ENCODE measurements at regions of chr5 and their contacts with region 1.

Region 1: DNA sequence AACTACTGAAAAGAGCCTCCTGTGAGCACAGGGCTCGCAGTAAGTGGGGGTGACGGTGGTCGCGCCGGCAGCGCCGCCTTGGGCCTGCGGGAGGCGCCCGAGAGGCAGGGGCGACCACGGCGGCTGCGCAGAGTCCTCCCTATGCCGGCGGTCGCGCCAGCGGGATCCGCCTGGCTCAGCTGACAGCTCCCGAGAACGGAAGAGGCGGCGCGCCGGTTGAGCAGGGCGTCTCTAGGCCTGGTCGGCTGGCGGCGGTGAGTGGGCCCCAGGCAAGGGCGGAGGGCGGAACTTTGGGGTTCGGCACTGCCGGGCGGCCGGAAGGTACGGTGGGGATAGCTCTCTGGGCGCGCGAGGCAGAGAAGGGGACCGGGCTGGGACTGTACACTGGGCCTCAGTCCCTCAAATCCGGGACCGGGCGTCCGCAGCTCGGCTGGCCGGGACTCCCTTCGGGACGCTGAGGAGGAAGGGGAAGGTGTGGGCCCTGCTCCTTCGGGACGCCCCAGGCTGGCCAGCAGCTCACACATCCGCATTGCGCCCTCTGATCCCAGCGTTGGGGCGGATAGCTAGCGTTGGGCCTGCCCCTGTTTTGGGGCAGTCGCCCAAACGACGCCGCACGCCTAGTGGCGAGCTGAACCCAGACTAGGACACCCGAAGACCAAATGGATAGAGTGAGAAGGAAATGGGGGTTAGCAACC is at the start of gene RNF14:
- DNase-seq: peak; percentile 86 to 97 (median 90)
- ATAC-seq: peak; percentile 95
- H3K4me3 ChIP-seq: peak within 1 kb of the TSS; percentile 76
- H3K4me3 Mint-ChIP-seq: peak within 1 kb of the TSS; percentile 98
- H3K27ac ChIP-seq: peak within 1 kb of the TSS; percentile 90 to 95
- H3K27ac Mint-ChIP-seq: peak within 1 kb of the TSS; percentile 99
- H3K4me1 ChIP-seq: peaks cover 15% of the 10 kb centered on the region
- H3K4me1 Mint-ChIP-seq: peaks cover 41% of the 10 kb centered on the region
- H3K27me3 ChIP-seq: no peaks in the 10 kb centered on the region
- H3K27me3 Mint-ChIP-seq: no peaks in the 10 kb centered on the region
- CTCF ChIP-seq: peak; percentile 97
- total RNA-seq, gene RNF14: 8.9 to 10.7 TPM

Region 2: DNA sequence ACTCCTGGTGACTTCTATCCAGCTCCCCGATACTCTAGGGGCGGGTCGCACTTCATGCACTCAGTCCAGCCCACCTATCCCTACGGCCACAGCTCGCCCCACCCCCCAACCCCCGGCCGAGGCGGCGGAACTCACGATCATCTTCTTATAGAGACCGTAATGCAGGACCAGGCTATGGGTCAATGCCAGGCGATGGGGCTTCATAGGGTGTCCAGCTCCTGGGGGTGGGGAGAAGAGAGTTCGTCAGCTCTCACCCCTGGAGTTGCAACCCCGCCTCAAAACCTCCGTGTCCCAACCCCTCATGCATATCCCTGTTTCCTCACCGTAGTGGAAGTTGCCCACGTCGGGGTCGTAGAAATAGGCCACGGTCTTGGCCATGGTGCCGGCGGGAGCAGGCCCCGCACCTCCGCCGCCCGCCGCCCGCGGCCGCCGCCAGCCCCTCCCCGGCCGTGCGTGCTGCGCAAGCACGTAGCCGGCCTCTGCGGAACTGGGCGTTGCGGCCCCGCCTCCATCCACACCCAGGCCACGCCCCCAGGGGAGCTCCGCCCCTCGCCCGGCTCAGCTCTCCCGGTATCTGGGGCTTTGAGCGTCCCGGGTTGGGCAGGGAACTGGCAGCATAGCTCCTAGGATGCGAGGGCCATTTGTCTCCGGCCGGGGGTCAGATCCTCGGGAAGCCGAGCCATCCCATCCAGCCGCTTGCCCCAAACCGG is 332.5 kb before region 1 on chr5 and contains the starts of genes HDAC3 and RELL2:
- CTCF ChIA-PET with region 1: interaction called, 4 read pairs
- POLR2A ChIA-PET with region 1: interaction called, 18 read pairs
- intact Hi-C with region 1: no loop called
- DNase-seq: peak; percentile 88 to 97 (median 94)
- ATAC-seq: peak; percentile 86
- H3K4me3 ChIP-seq: peak within 1 kb of the TSS; percentile 97
- H3K4me3 Mint-ChIP-seq: peak within 1 kb of the TSS; percentile 92
- H3K27ac ChIP-seq: peak within 1 kb of the TSS; percentile 77 to 79
- H3K27ac Mint-ChIP-seq: peak within 1 kb of the TSS; percentile 89
- H3K4me1 ChIP-seq: peaks cover 42% of the 10 kb centered on the region
- H3K4me1 Mint-ChIP-seq: peaks cover 45% of the 10 kb centered on the region
- H3K27me3 ChIP-seq: no peaks in the 10 kb centered on the region
- H3K27me3 Mint-ChIP-seq: no peaks in the 10 kb centered on the region
- CTCF ChIP-seq: no peak
- total RNA-seq, gene HDAC3: 51.1 to 52.7 TPM
- total RNA-seq, gene RELL2: 10.9 to 11.4 TPM

Region 3: DNA sequence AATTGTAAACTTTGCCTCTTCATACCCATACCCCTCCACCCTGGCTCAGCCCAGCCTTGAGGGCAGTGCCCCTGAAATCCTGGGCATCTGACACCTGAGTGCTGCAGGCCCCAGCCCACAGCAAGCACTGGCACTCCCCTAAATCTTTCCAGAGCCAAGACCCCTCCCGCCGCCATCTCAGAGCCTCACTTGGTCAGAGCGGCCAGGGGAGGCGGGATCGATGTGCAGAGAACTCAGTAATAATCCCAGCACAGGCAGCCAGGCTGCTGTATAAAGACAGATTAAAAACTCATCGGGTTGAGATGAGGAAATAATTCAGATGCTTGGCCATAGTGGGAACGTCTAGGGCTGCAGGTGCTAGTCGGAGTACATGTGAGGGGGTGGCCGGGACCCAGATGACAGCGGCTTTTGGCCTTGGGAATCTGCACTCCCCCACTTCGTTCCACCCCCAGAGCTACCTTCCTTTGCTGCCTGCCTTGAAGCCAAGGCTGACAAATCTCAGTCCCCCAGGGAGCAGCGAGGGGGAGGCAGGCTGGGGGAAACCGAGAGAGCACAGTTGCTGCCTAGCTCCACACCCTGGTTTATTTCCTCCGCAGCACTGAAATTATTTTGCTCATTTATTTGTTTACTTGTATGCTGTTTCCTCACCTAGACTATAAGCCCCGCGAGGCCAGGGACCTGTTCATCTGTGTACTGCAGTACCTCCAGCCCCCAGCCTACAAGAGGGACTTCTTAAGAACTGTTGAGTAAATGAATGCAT is 267.5 kb before region 1 on chr5:
- CTCF ChIA-PET with region 1: interaction called, 4 read pairs
- POLR2A ChIA-PET with region 1: interaction called, 18 read pairs
- intact Hi-C with region 1: no loop called
- DNase-seq: peak in 1 of 14 experiments; percentile 15
- ATAC-seq: peak; percentile 35
- H3K4me3 ChIP-seq: peak overlapping the region; percentile 73
- H3K4me3 Mint-ChIP-seq: no peak overlapping the region
- H3K27ac ChIP-seq: no peak overlapping the region
- H3K27ac Mint-ChIP-seq: no peak overlapping the region
- H3K4me1 ChIP-seq: peaks cover 23% of the 10 kb centered on the region
- H3K4me1 Mint-ChIP-seq: peaks cover 19% of the 10 kb centered on the region
- H3K27me3 ChIP-seq: peaks cover 32 to 33% of the 10 kb centered on the region in 2 experiments
- H3K27me3 Mint-ChIP-seq: peaks cover 51% of the 10 kb centered on the region
- CTCF ChIP-seq: no peak

Region 4: DNA sequence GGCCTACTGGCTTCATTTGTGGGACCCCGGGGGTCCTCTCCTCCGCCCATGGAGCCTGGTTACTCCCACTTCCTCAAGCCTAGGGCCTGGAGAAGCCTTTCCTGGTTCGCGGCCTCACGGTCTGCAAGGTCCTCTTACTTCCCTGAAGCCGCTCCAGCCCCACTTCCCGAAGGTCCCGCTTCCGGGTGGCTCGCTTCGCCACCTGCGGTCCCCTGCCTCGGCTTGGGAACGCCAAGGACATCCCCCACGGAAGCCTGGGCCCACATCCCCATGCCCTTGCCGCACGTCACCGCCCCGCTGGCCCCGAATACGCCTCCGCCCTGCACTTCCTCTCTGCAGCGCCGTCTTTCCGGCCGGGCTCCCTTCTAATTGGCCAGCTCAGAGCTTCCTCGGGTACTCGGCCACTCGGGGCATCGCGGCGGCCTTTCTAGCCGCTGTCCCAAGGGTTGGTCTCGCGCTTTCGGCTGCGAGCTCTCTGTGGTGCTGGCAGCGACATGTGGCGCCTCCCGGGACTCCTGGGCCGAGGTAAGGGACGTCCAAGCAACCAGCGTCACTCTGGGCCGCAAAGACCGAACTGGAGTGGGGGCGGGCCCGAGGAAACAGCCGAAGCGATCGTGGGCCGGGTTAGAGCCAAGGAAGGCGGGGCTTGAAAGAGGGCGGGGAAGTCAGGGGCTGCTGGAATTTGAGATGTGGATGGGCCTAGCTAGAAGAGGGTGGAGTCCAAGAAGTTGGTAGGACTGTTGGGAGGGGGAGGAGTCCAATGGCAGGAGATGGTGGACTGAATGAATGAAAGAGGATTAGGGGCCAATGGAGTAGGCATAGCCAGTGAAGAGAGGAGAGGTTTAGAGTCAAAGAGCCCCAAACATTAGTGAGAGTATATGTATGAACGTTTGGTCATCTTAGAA is 45.4 kb before region 1 on chr5 and contains the start of gene DELE1:
- CTCF ChIA-PET with region 1: interaction called, 15 read pairs
- POLR2A ChIA-PET with region 1: interaction called, 36 read pairs
- intact Hi-C with region 1: loop called in 1 of 2 experiments (anchors 2 kb)
- DNase-seq: peak; percentile 82 to 95 (median 87)
- ATAC-seq: peak; percentile 94
- H3K4me3 ChIP-seq: peak within 1 kb of the TSS; percentile 75
- H3K4me3 Mint-ChIP-seq: peak within 1 kb of the TSS; percentile 96
- H3K27ac ChIP-seq: peak within 1 kb of the TSS; percentile 94 to 96
- H3K27ac Mint-ChIP-seq: peak within 1 kb of the TSS; percentile 99
- H3K4me1 ChIP-seq: peaks cover 30% of the 10 kb centered on the region
- H3K4me1 Mint-ChIP-seq: peaks cover 45% of the 10 kb centered on the region
- H3K27me3 ChIP-seq: no peaks in the 10 kb centered on the region
- H3K27me3 Mint-ChIP-seq: no peaks in the 10 kb centered on the region
- CTCF ChIP-seq: no peak
- total RNA-seq, gene DELE1: 60.0 to 61.1 TPM

Region 5: DNA sequence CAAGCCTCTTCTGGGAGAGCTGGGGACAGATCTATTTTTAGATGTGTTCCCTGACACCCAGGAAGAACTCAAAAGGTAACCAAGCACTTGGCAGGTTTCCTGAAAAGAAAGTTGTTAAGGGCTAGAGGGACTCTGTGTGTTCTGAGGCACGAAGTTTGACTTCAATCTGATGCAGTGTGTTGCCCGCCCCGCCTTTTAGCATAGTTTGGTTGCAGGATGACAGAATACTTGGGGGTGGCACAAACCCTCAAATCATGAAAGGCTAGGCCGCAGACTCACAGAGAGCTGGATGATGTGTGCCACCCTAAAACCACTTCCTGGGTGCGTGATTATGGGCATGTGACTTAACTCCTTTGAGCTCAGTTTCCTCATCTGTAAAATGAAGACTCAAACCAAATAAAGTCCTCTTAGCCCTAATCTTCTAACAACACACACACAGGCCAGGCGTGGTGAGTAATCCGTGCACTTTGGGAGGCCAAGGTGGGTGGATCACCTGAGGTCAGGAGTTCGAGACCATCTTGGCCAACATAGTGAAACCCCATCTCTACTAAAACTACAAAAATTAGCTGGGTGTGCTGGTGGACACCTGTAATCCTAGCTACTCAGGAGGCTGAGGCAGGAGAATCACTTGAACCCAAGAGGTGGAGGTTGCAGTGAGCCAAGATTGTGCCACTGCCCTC is 126.7 kb after region 1 on chr5:
- CTCF ChIA-PET with region 1: interaction called, 3 read pairs
- POLR2A ChIA-PET with region 1: interaction called, 16 read pairs
- intact Hi-C with region 1: no loop called
- DNase-seq: peak; percentile 67 to 96 (median 76)
- ATAC-seq: peak; percentile 85
- H3K4me3 ChIP-seq: no peak overlapping the region
- H3K4me3 Mint-ChIP-seq: peak overlapping the region; percentile 28
- H3K27ac ChIP-seq: peak overlapping the region; percentile 71 to 75
- H3K27ac Mint-ChIP-seq: peak overlapping the region; percentile 94
- H3K4me1 ChIP-seq: peaks cover 61% of the 10 kb centered on the region
- H3K4me1 Mint-ChIP-seq: peaks cover 70% of the 10 kb centered on the region
- H3K27me3 ChIP-seq: no peaks in the 10 kb centered on the region
- H3K27me3 Mint-ChIP-seq: no peaks in the 10 kb centered on the region
- CTCF ChIP-seq: no peak

Region 6: GRCh38 chr5:142713121-142713706 is 744.2 kb after region 1 on chr5:
- CTCF ChIA-PET with region 1: interaction called, 14 read pairs
- POLR2A ChIA-PET with region 1: no interaction called
- intact Hi-C with region 1: no loop called
- DNase-seq: peak; percentile 70 to 93 (median 79)
- ATAC-seq: peak; percentile 93
- H3K4me3 ChIP-seq: peak overlapping the region; percentile 50
- H3K4me3 Mint-ChIP-seq: peak overlapping the region; percentile 76
- H3K27ac ChIP-seq: no peak overlapping the region
- H3K27ac Mint-ChIP-seq: no peak overlapping the region
- H3K4me1 ChIP-seq: peaks cover 15% of the 10 kb centered on the region
- H3K4me1 Mint-ChIP-seq: peaks cover 17% of the 10 kb centered on the region
- H3K27me3 ChIP-seq: peaks cover 0 to 3% of the 10 kb centered on the region in 2 experiments
- H3K27me3 Mint-ChIP-seq: peaks cover 9% of the 10 kb centered on the region
- CTCF ChIP-seq: peak; percentile 99

Region 7: GRCh38 chr5:143279698-143280097 is 1310.6 kb after region 1 on chr5:
- CTCF ChIA-PET with region 1: no interaction called
- POLR2A ChIA-PET with region 1: no interaction called
- intact Hi-C with region 1: no loop called
- DNase-seq: no peak
- ATAC-seq: no peak
- H3K4me3 ChIP-seq: no peak overlapping the region
- H3K4me3 Mint-ChIP-seq: no peak overlapping the region
- H3K27ac ChIP-seq: no peak overlapping the region
- H3K27ac Mint-ChIP-seq: no peak overlapping the region
- H3K4me1 ChIP-seq: no peaks in the 10 kb centered on the region
- H3K4me1 Mint-ChIP-seq: no peaks in the 10 kb centered on the region
- H3K27me3 ChIP-seq: no peaks in the 10 kb centered on the region
- H3K27me3 Mint-ChIP-seq: no peaks in the 10 kb centered on the region
- CTCF ChIP-seq: no peak